ENCODE measurements at regions of chr11 and their contacts with region 1.

Region 1: GRCh38 chr11:31870609-31871309 is 59.6 kb upstream of the PAX6 start:
- DNase-seq: peak; percentile 67
- H3K4me3 Mint-ChIP-seq: no peak overlapping the region
- H3K27ac Mint-ChIP-seq: no peak overlapping the region
- H3K4me1 Mint-ChIP-seq: no peaks in the 10 kb centered on the region
- H3K27me3 Mint-ChIP-seq: peaks cover 52% of the 10 kb centered on the region
- CTCF ChIP-seq: peak; percentile 57

Region 2: DNA sequence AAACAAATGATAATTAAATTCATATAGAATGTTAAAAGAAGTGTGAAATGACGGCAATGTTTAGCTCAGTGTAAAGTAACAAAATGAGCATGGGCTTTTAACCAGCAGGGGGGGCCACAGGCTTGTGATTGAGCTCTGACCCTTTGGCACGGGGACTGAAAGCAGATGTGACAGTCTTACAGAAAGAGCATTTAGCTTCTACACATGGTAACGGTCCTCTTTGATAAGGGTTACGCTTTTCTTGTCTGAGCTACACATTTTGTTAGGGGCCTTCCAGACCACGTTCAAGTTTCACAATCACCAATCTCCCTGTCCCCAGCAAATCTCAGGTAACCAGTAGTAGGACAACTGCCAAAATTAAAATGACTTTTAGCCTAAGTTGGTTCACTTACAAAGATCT is 763.7 kb before region 1 on chr11:
- CTCF ChIA-PET with region 1: interaction called, 12 read pairs
- intact Hi-C with region 1: loop called (anchors 1 kb)
- DNase-seq: peak; percentile 73
- H3K4me3 Mint-ChIP-seq: no peak overlapping the region
- H3K27ac Mint-ChIP-seq: no peak overlapping the region
- H3K4me1 Mint-ChIP-seq: no peaks in the 10 kb centered on the region
- H3K27me3 Mint-ChIP-seq: no peaks in the 10 kb centered on the region
- CTCF ChIP-seq: peak; percentile 78

Region 3: GRCh38 chr11:31240338-31240904 is 630.3 kb before region 1 on chr11:
- CTCF ChIA-PET with region 1: no interaction called
- intact Hi-C with region 1: loop called (anchors 1 kb)
- DNase-seq: peak; percentile 37
- H3K4me3 Mint-ChIP-seq: no peak overlapping the region
- H3K27ac Mint-ChIP-seq: no peak overlapping the region
- H3K4me1 Mint-ChIP-seq: no peaks in the 10 kb centered on the region
- H3K27me3 Mint-ChIP-seq: no peaks in the 10 kb centered on the region
- CTCF ChIP-seq: peak; percentile 49

Region 4: GRCh38 chr11:31397239-31397834 is 473.4 kb before region 1 on chr11:
- CTCF ChIA-PET with region 1: no interaction called
- intact Hi-C with region 1: loop called (anchors 1 kb)
- DNase-seq: no peak
- H3K4me3 Mint-ChIP-seq: no peak overlapping the region
- H3K27ac Mint-ChIP-seq: no peak overlapping the region
- H3K4me1 Mint-ChIP-seq: no peaks in the 10 kb centered on the region
- H3K27me3 Mint-ChIP-seq: no peaks in the 10 kb centered on the region
- CTCF ChIP-seq: peak; percentile 22

Region 5: GRCh38 chr11:31487848-31488247 is 382.9 kb before region 1 on chr11:
- CTCF ChIA-PET with region 1: no interaction called
- intact Hi-C with region 1: loop called (anchors 1 kb)
- DNase-seq: peak; percentile 15
- H3K4me3 Mint-ChIP-seq: no peak overlapping the region
- H3K27ac Mint-ChIP-seq: no peak overlapping the region
- H3K4me1 Mint-ChIP-seq: no peaks in the 10 kb centered on the region
- H3K27me3 Mint-ChIP-seq: no peaks in the 10 kb centered on the region
- CTCF ChIP-seq: peak; percentile 35

Region 6: GRCh38 chr11:31641477-31642062 is 229.2 kb before region 1 on chr11:
- CTCF ChIA-PET with region 1: interaction called, 6 read pairs
- intact Hi-C with region 1: loop called (anchors 1 kb)
- DNase-seq: peak; percentile 55
- H3K4me3 Mint-ChIP-seq: no peak overlapping the region
- H3K27ac Mint-ChIP-seq: no peak overlapping the region
- H3K4me1 Mint-ChIP-seq: no peaks in the 10 kb centered on the region
- H3K27me3 Mint-ChIP-seq: no peaks in the 10 kb centered on the region
- CTCF ChIP-seq: peak; percentile 56